MCF 10A (cell line): ENCODE measurements at regions of chr2 and their contacts with region 1.

Region 1: GRCh38 chr2:46410273-46411247 is 68.8 kb upstream of the TMEM247 start:
- DNase-seq: peak; percentile 57
- H3K4me3 Mint-ChIP-seq: no peak overlapping the region
- H3K27ac Mint-ChIP-seq: peak overlapping the region; percentile 82
- H3K4me1 Mint-ChIP-seq: peaks cover 35% of the 10 kb centered on the region
- H3K27me3 Mint-ChIP-seq: no peaks in the 10 kb centered on the region
- CTCF ChIP-seq: no peak

Region 2: DNA sequence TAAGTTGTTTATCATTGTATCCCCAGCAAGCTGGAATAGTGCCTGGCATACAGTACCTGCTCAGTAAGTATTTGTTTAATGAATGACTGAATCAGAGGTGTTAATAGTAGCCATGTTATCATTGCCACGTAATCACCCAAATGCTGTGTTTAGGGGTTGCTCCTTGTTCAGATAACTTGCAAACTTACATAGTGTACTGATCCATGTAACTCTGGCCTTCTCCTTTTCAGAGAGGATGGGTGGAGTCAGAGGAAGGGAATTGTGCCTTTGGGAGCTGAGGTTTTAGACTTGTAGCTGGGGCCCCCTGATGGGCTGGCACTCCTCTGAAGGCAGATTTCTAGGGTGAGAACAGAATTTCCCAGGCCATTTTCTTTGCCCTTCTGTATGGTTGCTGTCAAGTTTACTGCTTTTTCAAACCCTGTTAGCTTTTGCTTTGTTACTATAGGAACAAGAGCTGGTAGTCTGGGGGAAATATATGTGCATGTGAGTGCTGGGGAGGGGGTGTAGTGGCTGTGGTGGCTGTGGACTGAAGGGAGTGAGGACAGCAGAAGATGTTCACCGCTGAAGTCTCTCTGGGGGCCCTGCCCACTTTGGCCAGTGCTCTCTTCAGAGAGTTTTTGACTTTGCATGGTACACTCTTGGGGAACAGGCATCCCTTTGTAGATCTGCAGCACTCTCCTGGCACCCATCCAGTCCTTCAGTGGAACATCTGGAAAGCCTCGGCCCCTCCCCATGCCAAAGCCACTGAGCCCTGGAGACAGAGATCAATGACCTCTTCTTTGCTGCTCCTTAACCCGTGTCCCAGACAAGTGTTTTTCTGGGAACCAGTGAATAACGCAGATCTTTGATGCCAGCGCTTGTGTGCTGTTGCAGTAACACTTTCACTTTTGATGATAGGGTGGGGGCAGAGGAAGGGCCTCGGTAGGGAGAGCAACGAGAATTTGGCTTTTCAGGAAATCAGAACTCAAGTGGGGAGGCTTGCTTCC is 550.1 kb before region 1 on chr2:
- CTCF ChIA-PET with region 1: no interaction called
- POLR2A ChIA-PET with region 1: no interaction called
- intact Hi-C with region 1: no loop called
- DNase-seq: no peak
- H3K4me3 Mint-ChIP-seq: peak overlapping the region; percentile 3
- H3K27ac Mint-ChIP-seq: peak overlapping the region; percentile 10
- H3K4me1 Mint-ChIP-seq: peaks cover 10% of the 10 kb centered on the region
- H3K27me3 Mint-ChIP-seq: no peaks in the 10 kb centered on the region
- CTCF ChIP-seq: no peak

Region 3: GRCh38 chr2:46091004-46091403 is 319.6 kb before region 1 on chr2:
- CTCF ChIA-PET with region 1: no interaction called
- POLR2A ChIA-PET with region 1: no interaction called
- intact Hi-C with region 1: no loop called
- DNase-seq: no peak
- H3K4me3 Mint-ChIP-seq: no peak overlapping the region
- H3K27ac Mint-ChIP-seq: no peak overlapping the region
- H3K4me1 Mint-ChIP-seq: no peaks in the 10 kb centered on the region
- H3K27me3 Mint-ChIP-seq: no peaks in the 10 kb centered on the region
- CTCF ChIP-seq: no peak

Region 4: GRCh38 chr2:46385786-46386577 is 24.6 kb before region 1 on chr2:
- CTCF ChIA-PET with region 1: interaction called, 15 read pairs
- POLR2A ChIA-PET with region 1: interaction called, 38 read pairs
- intact Hi-C with region 1: loop called (anchors 1 kb)
- DNase-seq: peak; percentile 91
- H3K4me3 Mint-ChIP-seq: no peak overlapping the region
- H3K27ac Mint-ChIP-seq: peak overlapping the region; percentile 46
- H3K4me1 Mint-ChIP-seq: peaks cover 15% of the 10 kb centered on the region
- H3K27me3 Mint-ChIP-seq: no peaks in the 10 kb centered on the region
- CTCF ChIP-seq: no peak

Region 5: GRCh38 chr2:46422717-46423394 is 12.3 kb after region 1 on chr2:
- CTCF ChIA-PET with region 1: no interaction called
- POLR2A ChIA-PET with region 1: interaction called, 12 read pairs
- intact Hi-C with region 1: no loop called
- DNase-seq: peak; percentile 7
- H3K4me3 Mint-ChIP-seq: no peak overlapping the region
- H3K27ac Mint-ChIP-seq: no peak overlapping the region
- H3K4me1 Mint-ChIP-seq: peaks cover 7% of the 10 kb centered on the region
- H3K27me3 Mint-ChIP-seq: no peaks in the 10 kb centered on the region
- CTCF ChIP-seq: no peak

Region 6: GRCh38 chr2:46434851-46435273 is 24.3 kb after region 1 on chr2:
- CTCF ChIA-PET with region 1: interaction called, 3 read pairs
- POLR2A ChIA-PET with region 1: interaction called, 26 read pairs
- intact Hi-C with region 1: no loop called
- DNase-seq: peak; percentile 30
- H3K4me3 Mint-ChIP-seq: peak overlapping the region; percentile 1
- H3K27ac Mint-ChIP-seq: peak overlapping the region; percentile 46
- H3K4me1 Mint-ChIP-seq: peaks cover 29% of the 10 kb centered on the region
- H3K27me3 Mint-ChIP-seq: no peaks in the 10 kb centered on the region
- CTCF ChIP-seq: no peak

Region 7: GRCh38 chr2:46451131-46451711 is 40.7 kb after region 1 on chr2:
- CTCF ChIA-PET with region 1: interaction called, 5 read pairs
- POLR2A ChIA-PET with region 1: interaction called, 11 read pairs
- intact Hi-C with region 1: no loop called
- DNase-seq: peak; percentile 65
- H3K4me3 Mint-ChIP-seq: no peak overlapping the region
- H3K27ac Mint-ChIP-seq: peak overlapping the region; percentile 49
- H3K4me1 Mint-ChIP-seq: peaks cover 11% of the 10 kb centered on the region
- H3K27me3 Mint-ChIP-seq: no peaks in the 10 kb centered on the region
- CTCF ChIP-seq: no peak

Region 8: DNA sequence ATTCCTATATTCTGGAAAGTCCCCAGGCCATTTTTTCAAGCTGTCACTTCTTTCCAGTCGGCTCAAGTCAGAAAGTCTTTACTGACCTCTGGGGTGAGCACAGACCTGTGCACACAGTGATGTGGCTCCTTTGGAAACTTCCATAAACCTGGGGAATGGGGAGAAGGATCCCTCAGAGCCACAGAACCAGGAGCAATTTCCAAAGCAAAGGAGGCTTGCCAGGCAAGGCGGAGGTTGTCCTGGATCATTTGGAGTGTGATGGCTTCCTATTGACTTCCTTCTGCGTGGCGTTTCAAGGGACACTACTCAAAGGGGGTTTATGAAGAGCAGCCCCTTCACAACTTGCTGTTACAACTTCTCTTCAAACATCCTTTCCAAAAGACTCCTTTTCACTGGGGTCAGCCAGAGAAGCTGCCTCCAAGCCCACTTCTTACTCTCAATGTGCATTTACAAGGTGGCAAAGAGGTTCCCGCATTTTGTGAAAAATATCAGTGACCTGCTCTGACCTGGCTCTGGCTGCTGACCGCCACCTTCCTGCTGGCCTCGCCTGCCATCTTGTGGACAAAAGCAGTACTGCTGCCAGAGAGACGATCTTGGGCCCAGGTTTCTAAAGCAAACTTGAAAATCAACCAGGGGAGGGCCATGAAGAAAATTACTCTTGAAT is 50.6 kb after region 1 on chr2:
- CTCF ChIA-PET with region 1: interaction called, 12 read pairs
- POLR2A ChIA-PET with region 1: interaction called, 6 read pairs
- intact Hi-C with region 1: no loop called
- DNase-seq: peak; percentile 68
- H3K4me3 Mint-ChIP-seq: no peak overlapping the region
- H3K27ac Mint-ChIP-seq: peak overlapping the region; percentile 33
- H3K4me1 Mint-ChIP-seq: peaks cover 6% of the 10 kb centered on the region
- H3K27me3 Mint-ChIP-seq: no peaks in the 10 kb centered on the region
- CTCF ChIP-seq: peak; percentile 99

Region 9: DNA sequence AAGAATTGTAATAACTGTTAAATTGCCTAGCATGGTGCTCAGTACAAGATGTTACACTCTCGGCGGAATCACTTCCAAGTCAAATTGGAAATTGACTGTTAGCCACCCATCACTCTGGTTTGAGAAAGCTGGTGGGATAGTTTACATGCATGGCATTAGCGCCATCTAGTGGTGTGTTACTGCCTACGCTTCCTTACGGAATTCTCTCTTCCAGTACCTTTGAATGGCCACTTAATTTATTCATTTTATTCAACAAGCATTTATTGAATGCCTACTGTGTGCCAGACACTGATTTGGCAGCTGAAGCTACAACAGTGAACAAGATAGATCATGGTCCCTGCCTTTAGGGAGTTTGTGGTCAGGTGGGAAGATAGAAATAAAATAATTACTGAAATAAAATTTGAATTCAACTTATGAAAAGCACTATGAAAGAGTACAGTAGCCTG is 240.0 kb after region 1 on chr2:
- CTCF ChIA-PET with region 1: no interaction called
- POLR2A ChIA-PET with region 1: interaction called, 12 read pairs
- intact Hi-C with region 1: no loop called
- DNase-seq: peak; percentile 84
- H3K4me3 Mint-ChIP-seq: no peak overlapping the region
- H3K27ac Mint-ChIP-seq: no peak overlapping the region
- H3K4me1 Mint-ChIP-seq: peaks cover 34% of the 10 kb centered on the region
- H3K27me3 Mint-ChIP-seq: no peaks in the 10 kb centered on the region
- CTCF ChIP-seq: peak; percentile 84